OCI-LY7 (cell line): ENCODE measurements at regions of chr6 and their contacts with region 1.

Region 1: DNA sequence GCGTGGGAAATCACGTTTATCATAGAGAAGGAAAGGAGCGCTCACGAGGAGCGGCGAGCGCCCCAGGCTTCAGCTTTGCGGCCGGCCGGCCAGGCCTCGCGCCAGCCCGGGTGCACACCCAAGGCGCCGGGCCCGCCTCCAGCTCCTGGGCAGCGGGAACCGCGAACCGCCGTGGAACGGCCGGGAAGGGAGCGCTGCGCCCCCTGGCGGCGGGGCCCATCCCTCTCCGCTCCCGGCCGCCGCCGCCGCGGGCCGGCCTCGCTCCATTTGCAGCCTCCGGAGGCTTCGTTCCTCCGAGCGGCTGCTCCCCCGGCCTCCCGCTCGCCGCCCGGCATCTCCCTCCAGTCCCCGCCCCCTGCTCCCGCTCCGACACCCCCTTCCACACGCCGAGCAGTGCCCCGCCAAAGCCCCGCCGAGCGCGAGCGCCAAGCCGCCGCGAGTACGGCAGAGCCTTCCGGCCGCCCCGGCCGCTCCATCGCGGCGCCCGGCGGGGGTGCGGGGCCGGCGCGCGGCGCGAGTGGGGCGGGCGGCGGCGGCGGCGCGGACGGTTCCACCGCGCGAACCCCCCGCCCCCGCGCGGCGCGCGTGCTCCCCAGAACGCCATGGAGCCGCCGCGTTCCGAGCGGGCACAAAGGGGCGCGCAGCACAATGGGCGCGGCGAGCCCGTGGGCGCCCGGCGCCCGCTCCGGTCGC is 956 bp downstream of the BEND3 start:
- DNase-seq: peak; percentile 91
- H3K4me3 ChIP-seq: peak overlapping the region; percentile 71
- H3K27ac ChIP-seq: peak overlapping the region; percentile 99
- H3K4me1 ChIP-seq: peaks cover 53% of the 10 kb centered on the region
- CTCF ChIP-seq: peak; percentile 83

Region 2: DNA sequence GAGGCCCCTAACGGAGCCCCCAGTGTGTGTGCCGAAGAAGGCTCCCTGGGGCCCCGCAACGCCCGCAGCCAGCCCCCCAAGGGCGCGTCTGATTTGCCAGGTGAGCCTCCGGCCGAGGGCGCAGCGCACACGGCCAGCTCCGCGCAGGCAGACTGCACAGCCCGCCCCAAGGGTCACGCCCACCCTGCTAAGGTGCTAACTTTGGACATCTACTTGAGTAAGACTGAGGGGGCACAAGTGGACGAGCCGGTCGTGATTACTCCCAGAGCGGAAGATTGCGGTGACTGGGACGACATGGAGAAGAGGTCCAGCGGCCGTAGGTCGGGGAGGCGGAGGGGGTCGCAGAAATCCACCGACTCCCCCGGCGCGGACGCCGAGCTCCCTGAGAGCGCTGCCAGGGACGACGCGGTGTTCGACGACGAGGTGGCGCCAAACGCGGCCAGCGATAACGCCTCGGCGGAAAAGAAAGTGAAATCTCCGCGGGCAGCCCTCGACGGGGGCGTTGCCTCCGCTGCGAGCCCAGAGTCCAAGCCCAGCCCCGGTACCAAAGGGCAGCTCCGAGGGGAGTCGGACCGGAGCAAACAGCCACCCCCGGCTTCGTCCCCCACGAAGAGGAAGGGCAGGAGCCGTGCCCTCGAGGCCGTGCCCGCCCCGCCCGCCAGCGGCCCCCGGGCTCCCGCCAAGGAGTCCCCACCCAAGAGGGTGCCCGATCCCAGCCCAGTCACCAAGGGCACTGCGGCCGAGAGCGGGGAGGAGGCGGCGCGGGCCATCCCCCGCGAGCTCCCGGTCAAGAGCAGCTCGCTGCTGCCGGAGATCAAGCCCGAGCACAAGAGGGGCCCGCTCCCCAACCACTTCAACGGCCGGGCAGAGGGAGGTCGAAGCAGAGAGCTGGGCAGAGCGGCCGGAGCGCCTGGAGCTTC is 602.1 kb before region 1 on chr6:
- CTCF ChIA-PET with region 1: no interaction called
- POLR2A ChIA-PET with region 1: no interaction called
- intact Hi-C with region 1: loop called (anchors 5 kb)
- DNase-seq: peak; percentile 84
- H3K4me3 ChIP-seq: peak overlapping the region; percentile 84
- H3K27ac ChIP-seq: peak overlapping the region; percentile 88
- H3K4me1 ChIP-seq: peaks cover 41% of the 10 kb centered on the region
- CTCF ChIP-seq: peak; percentile 53

Region 3: GRCh38 chr6:106979427-106979884 is 134.9 kb before region 1 on chr6:
- CTCF ChIA-PET with region 1: no interaction called
- POLR2A ChIA-PET with region 1: no interaction called
- intact Hi-C with region 1: loop called (anchors 5 kb)
- DNase-seq: peak; percentile 91
- H3K4me3 ChIP-seq: no peak overlapping the region
- H3K27ac ChIP-seq: no peak overlapping the region
- H3K4me1 ChIP-seq: peaks cover 27% of the 10 kb centered on the region
- CTCF ChIP-seq: peak; percentile 99

Region 4: DNA sequence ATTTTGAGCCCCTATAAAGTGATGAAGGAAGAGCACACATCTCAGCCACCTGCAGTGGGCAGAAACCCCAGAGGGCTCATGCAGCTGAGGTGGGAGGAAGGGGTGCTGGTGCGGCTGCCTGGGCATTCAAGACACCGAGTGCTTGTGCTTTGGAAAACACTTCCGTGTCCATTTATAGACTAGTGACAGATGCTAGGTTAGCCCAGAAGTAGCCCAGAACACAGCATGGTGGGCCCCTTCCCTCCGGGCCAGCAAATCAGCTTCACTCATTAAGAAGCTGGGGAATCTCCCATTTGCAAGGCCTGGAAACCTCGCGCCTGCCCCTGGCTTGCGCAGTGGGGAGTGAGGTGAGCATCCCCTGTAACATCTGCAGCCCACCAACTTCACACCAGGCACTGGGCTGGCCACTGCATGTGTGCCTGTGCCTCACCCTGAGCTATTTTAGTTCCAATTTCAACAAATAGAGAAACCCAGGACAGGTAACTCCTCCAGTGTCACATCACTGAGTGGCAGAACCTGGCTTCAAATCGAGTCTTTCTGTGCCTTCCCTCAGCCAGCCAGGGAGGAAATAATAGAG is 11.9 kb before region 1 on chr6:
- CTCF ChIA-PET with region 1: interaction called, 10 read pairs
- POLR2A ChIA-PET with region 1: interaction called, 20 read pairs
- intact Hi-C with region 1: no loop called
- DNase-seq: peak; percentile 92
- H3K4me3 ChIP-seq: peak overlapping the region; percentile 46
- H3K27ac ChIP-seq: peak overlapping the region; percentile 95
- H3K4me1 ChIP-seq: peaks cover 65% of the 10 kb centered on the region
- CTCF ChIP-seq: no peak

Region 5: DNA sequence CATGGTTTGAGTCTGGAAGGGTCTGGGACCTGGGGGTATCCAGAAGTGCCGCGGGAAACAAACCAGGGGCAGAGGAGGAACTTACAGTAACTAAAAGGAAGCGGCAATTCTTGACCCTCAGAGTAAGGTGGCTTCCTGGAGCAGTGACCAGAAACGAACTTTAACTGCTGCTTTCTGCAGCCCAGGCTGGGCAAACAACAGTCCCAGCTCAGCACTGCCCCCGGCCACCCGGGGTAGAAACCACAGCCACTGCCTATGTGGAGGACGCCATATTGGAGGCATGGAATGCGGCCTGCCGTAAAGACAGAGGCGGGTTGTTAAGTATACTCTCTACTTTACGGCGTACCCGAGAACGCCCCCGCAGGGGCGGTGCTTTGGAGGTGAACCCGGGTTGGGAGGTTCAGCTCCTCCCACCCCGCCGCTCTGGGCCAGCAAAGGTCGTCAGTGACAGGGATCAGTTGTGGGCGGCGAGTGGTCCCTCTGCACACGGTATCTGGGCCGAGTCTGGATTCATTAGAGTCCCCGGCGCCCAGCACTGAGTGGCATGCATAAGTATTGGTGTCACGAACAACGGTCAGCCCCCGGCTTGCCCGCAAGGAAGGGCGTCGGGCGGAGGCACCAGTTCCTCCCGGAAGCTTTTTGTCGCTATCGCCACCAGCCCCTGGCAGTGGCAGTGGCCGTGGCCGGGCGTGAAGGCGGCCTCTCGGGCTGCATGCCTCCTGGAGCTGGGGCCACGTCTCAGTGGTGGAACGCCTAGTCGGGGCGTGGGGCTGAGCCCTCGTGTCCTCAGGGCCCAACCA is 345.1 kb after region 1 on chr6 and contains the start of gene PDSS2:
- CTCF ChIA-PET with region 1: no interaction called
- POLR2A ChIA-PET with region 1: interaction called, 9 read pairs
- intact Hi-C with region 1: loop called (anchors 5 kb)
- DNase-seq: peak; percentile 99
- H3K4me3 ChIP-seq: peak within 1 kb of the TSS; percentile 86
- H3K27ac ChIP-seq: peak within 1 kb of the TSS; percentile 90
- H3K4me1 ChIP-seq: peaks cover 19% of the 10 kb centered on the region
- CTCF ChIP-seq: peak; percentile 77
- total RNA-seq, gene PDSS2: 7.4 and 14.7 TPM in 2 replicates

Region 6: GRCh38 chr6:107657755-107658461 is 543.5 kb after region 1 on chr6:
- CTCF ChIA-PET with region 1: no interaction called
- POLR2A ChIA-PET with region 1: interaction called, 11 read pairs
- intact Hi-C with region 1: loop called (anchors 1 kb)
- DNase-seq: peak; percentile 99
- H3K4me3 ChIP-seq: peak overlapping the region; percentile 74
- H3K27ac ChIP-seq: peak overlapping the region; percentile 98
- H3K4me1 ChIP-seq: peaks cover 70% of the 10 kb centered on the region
- CTCF ChIP-seq: no peak